Heart left ventricle (tissue), 16 donors: ENCODE measurements at regions of chr3 and their contacts with region 1.

Region 1: GRCh38 chr3:124032648-124033359 is 40.9 kb upstream of the ROPN1 start:
- DNase-seq: peak; percentile 88 to 92 (median 90)
- ATAC-seq: peak; percentile 79 to 96 (median 93)
- H3K4me3 ChIP-seq: peak overlapping the region; percentile 62 to 92 (median 85)
- H3K27ac ChIP-seq: peak overlapping the region; percentile 80 to 98 (median 94)
- H3K4me1 ChIP-seq: peaks cover 0 to 34% (median 9%) of the 10 kb centered on the region in 12 donors
- H3K27me3 ChIP-seq: peaks cover 0 to 57% (median 0%) of the 10 kb centered on the region in 9 donors
- CTCF ChIP-seq: peak; percentile 61 to 88 (median 76)
- POLR2A ChIP-seq: no peak

Region 2: GRCh38 chr3:123859177-123859576 is 173.6 kb before region 1 on chr3:
- intact Hi-C with region 1: no loop called
- DNase-seq: no peak
- ATAC-seq: no peak
- H3K4me3 ChIP-seq: no peak overlapping the region
- H3K27ac ChIP-seq: no peak overlapping the region
- H3K4me1 ChIP-seq: no peaks in the 10 kb centered on the region
- H3K27me3 ChIP-seq: no peaks in the 10 kb centered on the region
- CTCF ChIP-seq: no peak
- POLR2A ChIP-seq: no peak

Region 3: DNA sequence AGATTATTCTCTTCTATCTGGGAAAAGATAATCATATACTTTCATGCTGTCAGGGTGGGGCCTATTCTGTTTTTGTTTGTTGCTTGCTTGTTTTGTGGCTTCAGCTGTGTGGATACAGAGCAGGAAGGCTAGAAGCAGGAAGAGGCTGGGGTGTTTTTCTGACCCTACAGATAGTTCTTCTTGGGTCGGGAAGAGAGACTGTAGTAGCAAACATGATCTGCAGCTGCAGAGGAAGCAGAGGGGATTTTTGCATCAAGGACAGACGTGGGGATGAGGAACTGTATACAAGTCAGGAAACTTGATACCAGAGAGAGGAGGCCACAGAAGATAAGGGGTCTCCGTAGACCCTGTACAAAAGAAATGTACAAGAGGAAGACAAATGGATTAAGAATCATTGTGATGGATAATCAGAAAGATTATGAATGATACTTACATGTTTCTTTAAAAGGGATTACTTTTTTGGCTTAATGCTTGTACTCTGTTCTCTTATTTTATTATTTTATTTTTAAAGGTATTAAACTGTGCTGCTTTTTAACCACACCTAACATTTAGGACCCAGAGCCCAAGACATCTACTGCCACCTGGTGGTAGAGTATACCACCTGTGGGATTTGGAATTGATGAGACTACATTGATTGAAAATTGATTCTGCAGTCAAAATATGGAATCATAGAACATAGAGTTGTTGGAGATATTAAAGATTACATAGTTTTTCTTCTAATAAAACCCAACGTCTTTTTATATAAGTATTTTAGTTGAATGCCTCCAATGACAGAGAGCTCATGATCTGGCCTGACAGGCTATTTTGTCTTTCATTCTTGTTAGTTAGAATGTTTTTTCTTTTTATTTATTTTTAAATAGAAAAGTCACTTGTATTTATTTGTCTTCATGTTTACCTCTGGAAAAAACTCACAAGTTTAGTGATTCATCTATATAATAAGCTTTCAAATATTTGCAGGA is 46.4 kb after region 1 on chr3:
- intact Hi-C with region 1: loop called (anchors 2 to 5 kb)
- DNase-seq: no peak
- ATAC-seq: peak in 2 of 4 donors; percentile 53 to 59
- H3K4me3 ChIP-seq: no peak overlapping the region
- H3K27ac ChIP-seq: peak overlapping the region in 4 of 12 donors; percentile 13 to 43 (median 28)
- H3K4me1 ChIP-seq: peaks cover 0 to 58% (median 30%) of the 10 kb centered on the region in 12 donors
- H3K27me3 ChIP-seq: no peaks in the 10 kb centered on the region
- CTCF ChIP-seq: peak; percentile 65 to 88 (median 82)
- POLR2A ChIP-seq: no peak

Region 4: DNA sequence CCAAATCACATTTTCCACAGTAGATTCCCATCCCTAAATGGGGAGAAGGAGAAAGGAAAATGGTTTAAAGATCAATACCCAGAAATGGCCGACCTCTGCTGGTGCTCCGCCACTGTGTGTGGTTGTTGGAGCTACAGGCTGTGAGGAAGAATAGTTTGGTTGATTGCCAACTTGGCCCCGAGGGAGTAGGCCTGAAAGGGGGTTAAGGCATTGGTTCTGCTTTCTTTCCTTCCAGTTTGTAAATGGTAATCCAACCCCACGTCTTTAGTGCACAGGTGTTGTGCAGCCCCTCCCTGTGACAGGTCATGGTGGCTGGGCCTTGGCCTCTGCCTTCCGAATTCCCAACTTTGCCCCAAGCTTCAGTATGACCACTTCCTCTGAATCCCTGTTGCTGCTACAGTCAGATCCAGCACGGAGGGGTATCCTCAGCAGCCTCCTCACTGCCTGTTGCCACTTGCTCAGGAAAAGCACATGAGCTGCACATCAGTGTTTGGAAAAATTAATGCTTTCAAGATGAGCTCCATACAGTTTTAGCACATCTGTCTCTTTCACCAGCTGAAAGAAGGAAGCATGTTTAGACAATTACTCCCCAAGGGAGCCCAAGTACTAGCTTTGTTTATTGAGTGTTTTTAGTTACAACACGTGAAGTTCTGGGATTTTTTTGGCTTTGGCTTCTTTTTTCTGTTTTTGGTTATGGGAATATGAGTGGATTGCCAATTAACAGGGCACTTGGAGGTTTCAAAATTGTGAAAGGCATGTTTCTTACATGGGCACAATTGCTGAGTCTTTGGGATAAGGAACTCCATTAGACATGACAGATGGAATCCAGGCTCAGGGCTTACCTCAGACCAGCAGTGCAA is 51.4 kb after region 1 on chr3:
- intact Hi-C with region 1: loop called in 9 of 10 experiments (anchors 2 to 5 kb)
- DNase-seq: peak in 4 of 5 donors; percentile 27 to 43 (median 36)
- ATAC-seq: peak in 3 of 4 donors; percentile 30 to 64 (median 48)
- H3K4me3 ChIP-seq: no peak overlapping the region
- H3K27ac ChIP-seq: peak overlapping the region in 7 of 12 donors; percentile 0 to 53 (median 18)
- H3K4me1 ChIP-seq: peaks cover 0 to 41% (median 13%) of the 10 kb centered on the region in 12 donors
- H3K27me3 ChIP-seq: no peaks in the 10 kb centered on the region
- CTCF ChIP-seq: no peak
- POLR2A ChIP-seq: no peak

Region 5: DNA sequence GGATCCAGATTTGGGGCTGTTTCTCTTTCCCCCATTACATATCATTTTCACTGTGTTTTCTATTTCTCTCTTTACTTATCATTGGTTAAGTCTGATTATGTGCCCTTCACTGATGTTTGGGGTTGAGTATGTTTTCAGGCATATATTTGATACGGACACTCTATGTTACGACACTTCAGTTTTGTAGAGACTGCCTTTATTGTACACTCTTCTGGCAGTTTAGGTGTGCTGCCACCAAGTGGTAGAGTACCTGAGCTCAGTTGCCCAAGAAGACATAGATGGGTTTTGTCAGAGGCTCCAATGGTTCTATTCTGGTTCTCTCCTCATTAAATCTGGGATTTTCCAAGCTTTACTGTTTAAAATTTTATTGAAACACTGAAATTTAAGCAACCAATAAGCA is 214.1 kb after region 1 on chr3:
- intact Hi-C with region 1: loop called in 1 of 10 experiments (anchors 5 kb)
- DNase-seq: no peak
- ATAC-seq: no peak
- H3K4me3 ChIP-seq: no peak overlapping the region
- H3K27ac ChIP-seq: peak overlapping the region in 7 of 12 donors; percentile 13 to 95 (median 88)
- H3K4me1 ChIP-seq: peaks cover 10 to 52% (median 35%) of the 10 kb centered on the region in 12 donors
- H3K27me3 ChIP-seq: no peaks in the 10 kb centered on the region
- CTCF ChIP-seq: peak in 10 of 12 donors; percentile 16 to 61 (median 36)
- POLR2A ChIP-seq: no peak